Head of caudate nucleus (tissue), 42 donors: ENCODE measurements at regions of chr5 and their contacts with region 1.

Region 1: GRCh38 chr5:126776497-126777256 is at the start of gene LMNB1:
- DNase-seq: peak; percentile 73 to 97 (median 93)

Region 2: DNA sequence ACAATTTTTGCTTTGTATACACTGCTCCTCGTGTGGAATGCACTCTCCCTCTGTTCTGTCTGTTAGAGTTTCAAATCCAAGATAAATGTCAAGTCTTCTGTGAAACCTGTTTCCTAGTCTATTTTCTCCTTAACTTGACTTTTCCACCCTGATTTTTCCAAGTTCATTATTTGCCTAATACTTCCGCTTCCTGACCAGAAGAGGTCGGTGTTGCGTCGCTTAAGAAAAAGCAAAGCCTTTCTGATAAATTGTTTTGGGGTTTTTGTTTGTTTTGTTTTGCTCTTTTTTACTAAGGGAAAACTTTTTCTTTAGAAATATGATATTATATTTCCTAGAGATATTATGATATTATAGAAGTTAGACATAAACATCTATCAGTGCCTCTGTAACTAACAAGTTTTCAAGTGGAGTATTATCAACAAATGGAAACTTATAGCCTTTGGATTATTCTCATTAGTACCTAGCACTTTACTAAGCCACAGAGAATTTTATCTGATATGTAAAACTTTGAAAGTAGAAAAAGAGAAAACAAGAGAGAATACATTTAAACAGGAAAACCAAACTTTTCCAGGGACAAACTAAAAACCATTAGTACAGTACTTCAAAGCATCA is 120.2 kb before region 1 on chr5:
- intact Hi-C with region 1: loop called (anchors 5 kb)
- DNase-seq: peak in 24 of 42 donors; percentile 10 to 68 (median 30)

Region 3: DNA sequence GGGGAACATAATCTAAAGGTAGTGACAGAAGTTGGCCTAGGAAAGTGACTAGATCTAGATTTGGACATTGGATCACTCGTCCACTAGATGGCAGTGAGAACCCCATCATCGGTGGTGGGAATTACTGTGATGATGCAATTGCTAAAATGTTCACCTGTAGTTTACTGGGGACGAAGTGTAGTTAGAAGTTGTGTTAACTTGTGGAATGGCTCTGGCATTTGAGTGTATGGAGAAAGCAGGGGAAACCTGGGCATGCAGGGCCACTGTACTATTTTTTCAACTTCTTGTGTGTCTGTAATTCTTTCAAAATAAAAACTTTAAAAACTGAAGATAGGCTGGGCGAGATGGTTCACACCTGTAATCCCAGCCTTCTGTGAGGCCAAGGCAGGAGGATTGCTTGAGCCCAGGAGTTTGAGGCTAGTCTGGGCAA is 100.5 kb before region 1 on chr5:
- intact Hi-C with region 1: loop called (anchors 5 kb)
- DNase-seq: peak in 40 of 42 donors; percentile 11 to 85 (median 62)